Vagina (tissue), 2 donors: ENCODE measurements at regions of chr14 and their contacts with region 1.

Region 1: DNA sequence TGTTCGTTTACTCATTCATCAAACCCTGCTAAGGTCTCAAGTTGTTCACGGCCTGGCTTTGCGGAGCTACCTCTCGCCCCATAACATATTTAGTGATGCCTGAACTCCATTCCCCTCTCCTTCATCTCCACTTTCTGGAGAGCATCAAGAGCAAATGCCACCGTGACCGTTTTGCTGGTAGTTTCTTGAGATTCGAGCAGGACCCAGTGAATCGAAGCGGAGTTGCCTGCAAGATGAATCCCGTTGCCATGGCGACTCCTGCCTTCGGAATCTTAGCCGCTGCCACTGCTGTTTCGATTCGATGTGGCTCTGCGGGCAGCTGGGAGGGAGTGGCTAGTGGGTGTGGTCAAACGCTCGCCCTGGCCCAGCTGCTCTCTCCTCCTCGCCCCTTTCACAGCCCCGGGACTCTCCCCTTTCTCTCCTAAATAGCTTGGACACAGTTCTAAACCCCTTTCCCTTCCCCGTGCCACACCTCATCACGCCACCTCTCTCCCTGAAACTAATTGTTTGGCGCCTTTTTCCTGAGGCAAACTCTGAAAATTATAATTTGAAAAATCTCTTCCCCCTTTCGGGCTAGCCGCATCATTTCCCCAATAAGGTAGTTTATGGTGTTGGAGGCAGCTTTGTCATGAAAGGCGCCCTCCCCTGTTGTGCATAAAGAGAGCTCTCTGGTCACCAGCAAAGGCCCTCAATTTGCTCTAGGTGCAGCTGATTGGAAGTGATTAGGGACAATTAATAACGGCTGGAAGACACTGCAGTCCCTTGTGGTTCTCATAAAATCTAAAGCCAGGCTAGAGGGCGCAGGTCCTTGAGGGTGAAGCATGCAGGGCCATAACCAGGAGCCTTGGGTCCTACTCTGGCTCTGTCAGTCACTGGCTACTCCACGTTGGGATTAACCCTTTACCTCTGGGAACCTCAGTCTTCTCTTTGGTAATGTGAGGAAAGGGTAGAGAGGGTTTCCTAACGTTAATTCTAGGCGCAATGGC is 1.6 kb downstream of the DAAM1 start:
- DNase-seq: peak in 1 of 2 donors; percentile 90
- H3K4me3 ChIP-seq: peak overlapping the region; percentile 83 to 92
- H3K27ac ChIP-seq: peak overlapping the region; percentile 90
- H3K4me1 ChIP-seq: peaks cover 54% of the 10 kb centered on the region
- H3K27me3 ChIP-seq: no peaks in the 10 kb centered on the region
- CTCF ChIP-seq: no peak
- POLR2A ChIP-seq: no peak

Region 2: GRCh38 chr14:59254146-59254941 is 64.3 kb after region 1 on chr14:
- intact Hi-C with region 1: loop called (anchors 10 kb)
- DNase-seq: no peak
- H3K4me3 ChIP-seq: no peak overlapping the region
- H3K27ac ChIP-seq: peak overlapping the region; percentile 84
- H3K4me1 ChIP-seq: peaks cover 37% of the 10 kb centered on the region
- H3K27me3 ChIP-seq: no peaks in the 10 kb centered on the region
- CTCF ChIP-seq: no peak
- POLR2A ChIP-seq: no peak

Region 3: GRCh38 chr14:59428581-59429012 is 238.5 kb after region 1 on chr14:
- intact Hi-C with region 1: loop called (anchors 10 kb)
- DNase-seq: no peak
- H3K4me3 ChIP-seq: no peak overlapping the region
- H3K27ac ChIP-seq: peak overlapping the region; percentile 69
- H3K4me1 ChIP-seq: peaks cover 28% of the 10 kb centered on the region
- H3K27me3 ChIP-seq: no peaks in the 10 kb centered on the region
- CTCF ChIP-seq: peak in 1 of 3 experiments; percentile 15
- POLR2A ChIP-seq: no peak